CD4-positive, alpha-beta memory T cell (primary cell): ENCODE measurements at regions of chr12 and their contacts with region 1.

Region 1: DNA sequence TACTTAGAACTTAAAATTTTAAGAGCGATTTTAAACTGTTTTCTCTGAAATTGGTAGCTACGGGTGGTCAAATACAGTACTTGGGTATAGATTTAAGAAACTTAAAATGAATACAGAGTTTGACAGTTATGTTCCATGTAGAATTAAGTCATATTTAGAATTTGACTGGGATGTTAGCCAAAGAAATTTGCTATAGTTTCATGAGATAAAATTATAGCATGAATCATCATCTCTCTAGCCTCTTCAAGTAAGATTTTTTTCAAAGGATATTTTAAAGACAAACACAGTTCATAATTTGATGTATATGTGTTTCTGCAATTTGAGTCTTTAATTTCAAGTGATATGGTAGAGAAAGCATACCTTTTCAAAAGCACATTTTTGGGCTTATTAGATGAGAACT is 41.0 kb downstream of the ZCRB1 start:
- DNase-seq: no peak
- H3K4me3 ChIP-seq: no peak overlapping the region
- H3K4me3 Mint-ChIP-seq: no peak overlapping the region
- H3K27ac ChIP-seq: no peak overlapping the region
- H3K27ac Mint-ChIP-seq: no peak overlapping the region
- H3K4me1 ChIP-seq: no peaks in the 10 kb centered on the region
- H3K4me1 Mint-ChIP-seq: peaks cover 0 to 3% (median 0%) of the 10 kb centered on the region in 4 donors
- H3K27me3 ChIP-seq: no peaks in the 10 kb centered on the region
- H3K27me3 Mint-ChIP-seq: peaks cover 0 to 9% of the 10 kb centered on the region in 2 donors

Region 2: GRCh38 chr12:42299392-42300308 is 14.8 kb after region 1 on chr12:
- CTCF ChIA-PET with region 1: no interaction called
- POLR2A ChIA-PET with region 1: no interaction called
- intact Hi-C with region 1: loop called (anchors 1 kb)
- DNase-seq: peak in 3 of 5 donors; percentile 4 to 75 (median 6)
- H3K4me3 ChIP-seq: no peak overlapping the region
- H3K4me3 Mint-ChIP-seq: peak overlapping the region; percentile 11 to 81 (median 70)
- H3K27ac ChIP-seq: no peak overlapping the region
- H3K27ac Mint-ChIP-seq: peak overlapping the region in 5 of 7 donors; percentile 39 to 84 (median 67)
- H3K4me1 ChIP-seq: no peaks in the 10 kb centered on the region
- H3K4me1 Mint-ChIP-seq: peaks cover 8 to 18% (median 15%) of the 10 kb centered on the region in 4 donors
- H3K27me3 ChIP-seq: no peaks in the 10 kb centered on the region
- H3K27me3 Mint-ChIP-seq: no peaks in the 10 kb centered on the region